ENCODE measurements at regions of chr2 and their contacts with region 1.

Region 1: DNA sequence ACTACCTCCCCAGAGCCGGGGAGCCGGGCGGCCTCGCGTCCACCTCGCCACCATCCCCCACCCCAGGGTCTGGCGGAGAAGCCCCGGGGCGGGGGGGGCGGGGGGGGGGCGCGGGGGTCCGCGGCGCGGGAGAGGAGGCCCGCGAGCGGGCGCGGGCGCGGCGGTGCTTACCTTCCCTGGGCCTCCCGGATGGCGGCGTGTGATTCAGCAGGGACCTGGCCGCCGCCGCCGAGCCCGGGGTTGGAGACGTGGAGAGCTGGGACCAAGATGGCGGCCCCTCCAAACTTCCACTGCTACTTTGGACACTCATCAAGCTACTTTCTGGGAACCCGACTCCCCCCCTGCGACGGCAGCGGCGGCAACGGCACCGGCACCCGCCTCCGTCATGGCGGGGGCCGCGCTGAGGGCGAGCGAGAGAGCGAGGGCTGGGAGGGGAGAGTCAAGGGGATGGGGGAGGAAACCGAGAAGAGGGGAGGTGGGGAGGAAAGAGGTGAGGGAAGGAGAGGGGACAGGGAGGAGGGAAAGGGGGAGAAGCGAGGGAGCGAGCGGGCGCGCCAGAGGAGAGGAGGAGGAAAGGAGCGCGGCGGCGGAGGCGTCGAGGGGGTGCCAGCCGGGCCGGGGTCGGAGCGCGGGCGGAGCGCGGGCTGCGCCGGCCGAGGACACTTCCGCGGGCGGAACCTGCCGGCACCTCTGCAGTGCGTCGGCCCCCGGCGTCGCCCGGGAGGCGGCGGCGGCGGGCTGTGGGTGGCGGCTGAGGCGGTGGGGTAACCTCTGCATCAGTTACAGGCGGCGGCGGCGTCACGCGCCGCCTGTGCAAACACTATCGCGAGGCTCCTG is at the start of gene TLK1:
- DNase-seq: peak; percentile 52 to 91 (median 78)
- ATAC-seq: peak; percentile 65
- H3K4me3 ChIP-seq: peak within 1 kb of the TSS; percentile 86
- H3K4me3 Mint-ChIP-seq: peak within 1 kb of the TSS; percentile 96
- H3K27ac ChIP-seq: peak within 1 kb of the TSS; percentile 62 to 95
- H3K27ac Mint-ChIP-seq: peak within 1 kb of the TSS; percentile 95
- H3K4me1 ChIP-seq: peaks cover 30% of the 10 kb centered on the region
- H3K4me1 Mint-ChIP-seq: peaks cover 76% of the 10 kb centered on the region
- H3K27me3 ChIP-seq: no peaks in the 10 kb centered on the region
- H3K27me3 Mint-ChIP-seq: no peaks in the 10 kb centered on the region
- CTCF ChIP-seq: no peak
- total RNA-seq, gene TLK1: 135 to 138 TPM

Region 2: DNA sequence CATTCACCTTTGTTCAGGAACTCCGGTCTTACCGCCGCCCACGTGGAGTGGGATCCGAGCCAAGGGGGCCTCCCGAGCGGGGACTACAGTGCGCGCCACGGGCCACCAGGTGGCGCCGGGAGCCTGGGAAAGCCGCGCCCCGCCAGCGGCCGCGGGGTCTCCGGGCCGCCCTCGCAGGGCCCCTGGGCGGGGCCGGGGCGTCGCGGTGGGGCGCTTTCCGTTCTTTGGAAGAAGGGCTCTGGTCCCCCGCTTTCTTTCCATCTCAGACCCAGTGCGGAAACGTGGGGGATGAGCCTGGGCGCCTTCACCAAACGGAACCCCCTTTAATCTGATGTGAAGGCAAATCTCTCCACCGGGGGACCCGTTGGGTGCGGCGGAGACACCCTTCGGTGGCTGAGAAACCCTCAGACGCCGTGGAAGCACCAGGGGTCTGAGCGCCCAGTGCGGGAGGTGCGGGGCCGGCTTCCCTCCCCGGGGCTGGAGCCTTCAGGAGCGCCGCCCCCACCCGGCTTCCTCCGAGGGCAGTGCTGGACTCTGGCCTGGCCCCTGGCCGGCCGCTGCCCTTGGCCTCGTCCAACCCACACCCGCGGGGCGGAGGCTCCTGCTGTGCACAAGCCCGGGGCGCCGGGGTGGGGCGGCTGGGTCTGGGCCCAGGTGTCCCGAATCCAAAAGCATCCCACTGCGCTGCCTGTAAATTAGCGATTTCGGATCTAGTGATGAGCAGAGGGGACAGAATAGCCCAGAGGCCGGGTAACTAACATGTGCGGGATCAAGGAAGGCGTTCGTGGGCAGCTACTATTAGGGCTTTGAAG is 186.6 kb before region 1 on chr2:
- CTCF ChIA-PET with region 1: interaction called, 18 read pairs
- POLR2A ChIA-PET with region 1: interaction called, 29 read pairs
- intact Hi-C with region 1: loop called (anchors 1 kb)
- DNase-seq: peak; percentile 81 to 96 (median 84)
- ATAC-seq: peak; percentile 93
- H3K4me3 ChIP-seq: peak overlapping the region; percentile 86
- H3K4me3 Mint-ChIP-seq: peak overlapping the region; percentile 86
- H3K27ac ChIP-seq: peak overlapping the region in 1 of 2 donors; percentile 41
- H3K27ac Mint-ChIP-seq: peak overlapping the region; percentile 54
- H3K4me1 ChIP-seq: peaks cover 16% of the 10 kb centered on the region
- H3K4me1 Mint-ChIP-seq: peaks cover 12% of the 10 kb centered on the region
- H3K27me3 ChIP-seq: no peaks in the 10 kb centered on the region
- H3K27me3 Mint-ChIP-seq: no peaks in the 10 kb centered on the region
- CTCF ChIP-seq: peak; percentile 72

Region 3: GRCh38 chr2:171042253-171042969 is 117.9 kb before region 1 on chr2:
- CTCF ChIA-PET with region 1: no interaction called
- POLR2A ChIA-PET with region 1: no interaction called
- intact Hi-C with region 1: loop called in 1 of 2 experiments (anchors 10 kb)
- DNase-seq: peak in 2 of 14 experiments; percentile 23 to 54
- ATAC-seq: peak; percentile 57
- H3K4me3 ChIP-seq: no peak overlapping the region
- H3K4me3 Mint-ChIP-seq: peak overlapping the region; percentile 14
- H3K27ac ChIP-seq: peak overlapping the region in 1 of 2 donors; percentile 31
- H3K27ac Mint-ChIP-seq: peak overlapping the region; percentile 85
- H3K4me1 ChIP-seq: peaks cover 11% of the 10 kb centered on the region
- H3K4me1 Mint-ChIP-seq: peaks cover 32% of the 10 kb centered on the region
- H3K27me3 ChIP-seq: no peaks in the 10 kb centered on the region
- H3K27me3 Mint-ChIP-seq: no peaks in the 10 kb centered on the region
- CTCF ChIP-seq: no peak

Region 4: GRCh38 chr2:171185941-171186340 is 25.6 kb after region 1 on chr2:
- CTCF ChIA-PET with region 1: no interaction called
- POLR2A ChIA-PET with region 1: no interaction called
- intact Hi-C with region 1: no loop called
- DNase-seq: no peak
- ATAC-seq: no peak
- H3K4me3 ChIP-seq: no peak overlapping the region
- H3K4me3 Mint-ChIP-seq: no peak overlapping the region
- H3K27ac ChIP-seq: no peak overlapping the region
- H3K27ac Mint-ChIP-seq: no peak overlapping the region
- H3K4me1 ChIP-seq: no peaks in the 10 kb centered on the region
- H3K4me1 Mint-ChIP-seq: no peaks in the 10 kb centered on the region
- H3K27me3 ChIP-seq: no peaks in the 10 kb centered on the region
- H3K27me3 Mint-ChIP-seq: no peaks in the 10 kb centered on the region
- CTCF ChIP-seq: no peak

Region 5: DNA sequence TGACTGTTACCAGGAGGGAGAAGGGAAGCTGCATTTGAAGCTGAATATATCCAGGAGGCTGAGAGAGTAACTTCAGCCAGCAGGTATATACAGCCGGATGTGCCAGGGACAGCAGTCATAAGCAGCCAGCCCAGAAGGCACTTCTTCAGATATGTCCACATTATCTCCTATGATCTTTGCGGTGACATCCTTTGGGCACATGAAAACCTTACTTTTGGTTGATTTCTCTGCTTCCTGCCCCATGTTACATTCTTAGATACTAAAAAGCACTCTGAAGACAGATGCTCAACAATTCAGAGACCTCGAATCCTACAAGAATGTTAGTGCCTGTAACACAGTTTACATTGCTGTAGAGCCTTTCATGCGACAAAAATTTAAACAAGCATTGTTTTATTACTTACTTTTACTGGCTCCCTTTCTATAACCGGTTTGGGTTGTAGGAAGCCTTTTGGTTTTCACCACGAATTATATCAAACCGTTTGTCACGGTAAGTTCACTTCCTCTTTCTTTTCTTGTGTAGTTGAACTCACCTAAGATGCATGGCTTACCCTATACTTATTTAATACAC is 50.6 kb after region 1 on chr2:
- CTCF ChIA-PET with region 1: no interaction called
- POLR2A ChIA-PET with region 1: no interaction called
- intact Hi-C with region 1: loop called (anchors 2 to 5 kb)
- DNase-seq: peak; percentile 7 to 76 (median 31)
- ATAC-seq: peak; percentile 94
- H3K4me3 ChIP-seq: peak overlapping the region; percentile 50
- H3K4me3 Mint-ChIP-seq: peak overlapping the region; percentile 77
- H3K27ac ChIP-seq: peak overlapping the region in 1 of 2 donors; percentile 66
- H3K27ac Mint-ChIP-seq: peak overlapping the region; percentile 80
- H3K4me1 ChIP-seq: peaks cover 18% of the 10 kb centered on the region
- H3K4me1 Mint-ChIP-seq: peaks cover 25% of the 10 kb centered on the region
- H3K27me3 ChIP-seq: no peaks in the 10 kb centered on the region
- H3K27me3 Mint-ChIP-seq: no peaks in the 10 kb centered on the region
- CTCF ChIP-seq: no peak

Region 6: GRCh38 chr2:171225302-171225980 is 65.1 kb after region 1 on chr2:
- CTCF ChIA-PET with region 1: no interaction called
- POLR2A ChIA-PET with region 1: no interaction called
- intact Hi-C with region 1: no loop called
- DNase-seq: no peak
- ATAC-seq: no peak
- H3K4me3 ChIP-seq: no peak overlapping the region
- H3K4me3 Mint-ChIP-seq: no peak overlapping the region
- H3K27ac ChIP-seq: no peak overlapping the region
- H3K27ac Mint-ChIP-seq: no peak overlapping the region
- H3K4me1 ChIP-seq: no peaks in the 10 kb centered on the region
- H3K4me1 Mint-ChIP-seq: no peaks in the 10 kb centered on the region
- H3K27me3 ChIP-seq: no peaks in the 10 kb centered on the region
- H3K27me3 Mint-ChIP-seq: no peaks in the 10 kb centered on the region
- CTCF ChIP-seq: no peak

Region 7: GRCh38 chr2:171325886-171326585 is 165.7 kb after region 1 on chr2:
- CTCF ChIA-PET with region 1: no interaction called
- POLR2A ChIA-PET with region 1: interaction called, 14 read pairs
- intact Hi-C with region 1: loop called in 1 of 2 experiments (anchors 10 kb)
- DNase-seq: peak in 3 of 14 experiments; percentile 72 to 77 (median 76)
- ATAC-seq: peak; percentile 94
- H3K4me3 ChIP-seq: peak overlapping the region; percentile 14
- H3K4me3 Mint-ChIP-seq: peak overlapping the region; percentile 52
- H3K27ac ChIP-seq: peak overlapping the region in 1 of 2 donors; percentile 13
- H3K27ac Mint-ChIP-seq: peak overlapping the region; percentile 72
- H3K4me1 ChIP-seq: peaks cover 22% of the 10 kb centered on the region
- H3K4me1 Mint-ChIP-seq: peaks cover 49% of the 10 kb centered on the region
- H3K27me3 ChIP-seq: no peaks in the 10 kb centered on the region
- H3K27me3 Mint-ChIP-seq: no peaks in the 10 kb centered on the region
- CTCF ChIP-seq: no peak

Region 8: DNA sequence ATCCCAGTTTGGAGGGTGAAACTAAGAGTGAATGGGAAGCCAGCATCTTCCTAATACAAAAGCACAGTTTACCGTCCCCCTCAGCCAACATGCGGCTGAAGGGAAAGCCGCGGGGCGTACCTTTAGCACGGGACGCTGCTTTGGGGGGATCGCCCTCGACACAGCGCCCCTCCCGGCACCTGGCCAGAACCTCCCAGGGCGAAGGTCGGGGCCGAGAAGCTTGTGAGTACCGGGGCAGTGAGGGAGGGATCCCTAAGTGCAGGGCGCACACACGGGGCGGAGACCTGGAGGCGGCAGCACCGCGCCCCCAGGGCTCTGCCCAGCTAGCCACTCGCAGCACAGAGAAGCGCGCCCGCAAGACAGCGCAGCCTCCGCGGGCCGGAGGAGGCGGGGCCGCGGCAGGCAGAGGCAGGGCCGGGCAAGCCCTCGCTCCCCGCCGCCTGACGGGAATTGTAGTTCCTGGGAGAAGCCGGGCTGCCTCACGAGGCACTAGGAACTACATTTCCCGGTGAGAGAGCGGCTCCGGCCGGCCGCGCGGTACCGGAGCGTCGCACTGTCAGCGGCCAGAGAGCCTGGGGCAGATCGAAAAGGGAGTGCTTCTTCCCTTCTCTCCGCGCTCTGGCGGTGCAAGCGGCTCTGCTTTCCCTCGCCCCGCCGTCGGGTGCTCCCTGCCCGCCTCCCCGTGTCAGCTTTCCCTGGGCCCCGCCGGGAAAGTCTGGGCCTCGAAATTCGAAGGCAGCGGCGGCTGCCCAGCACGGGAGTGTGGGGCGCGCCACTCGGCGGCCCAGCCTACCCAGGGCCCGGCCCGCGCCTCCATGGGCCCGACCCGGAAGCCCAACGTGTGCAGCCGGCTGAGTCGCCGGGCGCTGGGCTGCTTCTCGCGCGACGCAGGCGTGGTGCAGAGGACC is 273.7 kb after region 1 on chr2 and contains the starts of genes DCAF17 and METTL8:
- CTCF ChIA-PET with region 1: interaction called, 3 read pairs
- POLR2A ChIA-PET with region 1: interaction called, 6 read pairs
- intact Hi-C with region 1: loop called (anchors 2 to 5 kb)
- DNase-seq: peak; percentile 84 to 97 (median 92)
- ATAC-seq: peak; percentile 91
- H3K4me3 ChIP-seq: peak within 1 kb of the TSS; percentile 65
- H3K4me3 Mint-ChIP-seq: peak within 1 kb of the TSS; percentile 94
- H3K27ac ChIP-seq: peak within 1 kb of the TSS; percentile 93 to 96
- H3K27ac Mint-ChIP-seq: peak within 1 kb of the TSS; percentile 88
- H3K4me1 ChIP-seq: peaks cover 10% of the 10 kb centered on the region
- H3K4me1 Mint-ChIP-seq: peaks cover 62% of the 10 kb centered on the region
- H3K27me3 ChIP-seq: no peaks in the 10 kb centered on the region
- H3K27me3 Mint-ChIP-seq: no peaks in the 10 kb centered on the region
- CTCF ChIP-seq: peak; percentile 59
- total RNA-seq, gene DCAF17: 13.0 to 14.3 TPM
- total RNA-seq, gene METTL8: 9.7 to 11.5 TPM

Measured in CD4-positive, alpha-beta T cell (primary cell).